ENCODE measurements at regions of chr9 and their contacts with region 1.

Region 1: GRCh38 chr9:75866273-75866871 is 24.1 kb upstream of the PCSK5 start:
- DNase-seq: peak in 8 of 9 experiments; percentile 8 to 62 (median 28)
- ATAC-seq: no peak
- H3K4me3 ChIP-seq: no peak overlapping the region
- H3K4me3 Mint-ChIP-seq: no peak overlapping the region
- H3K27ac ChIP-seq: no peak overlapping the region
- H3K27ac Mint-ChIP-seq: no peak overlapping the region
- H3K4me1 ChIP-seq: peaks cover 20% of the 10 kb centered on the region
- H3K4me1 Mint-ChIP-seq: peaks cover 26% of the 10 kb centered on the region
- H3K27me3 ChIP-seq: peaks cover 0 to 2% of the 10 kb centered on the region in 2 experiments
- H3K27me3 Mint-ChIP-seq: no peaks in the 10 kb centered on the region
- CTCF ChIP-seq: peak; percentile 73

Region 2: GRCh38 chr9:74765481-74765971 is 1100.8 kb before region 1 on chr9:
- CTCF ChIA-PET with region 1: no interaction called
- POLR2A ChIA-PET with region 1: no interaction called
- intact Hi-C with region 1: loop called (anchors 5 to 10 kb)
- DNase-seq: no peak
- ATAC-seq: no peak
- H3K4me3 ChIP-seq: no peak overlapping the region
- H3K4me3 Mint-ChIP-seq: no peak overlapping the region
- H3K27ac ChIP-seq: no peak overlapping the region
- H3K27ac Mint-ChIP-seq: no peak overlapping the region
- H3K4me1 ChIP-seq: no peaks in the 10 kb centered on the region
- H3K4me1 Mint-ChIP-seq: no peaks in the 10 kb centered on the region
- H3K27me3 ChIP-seq: no peaks in the 10 kb centered on the region
- H3K27me3 Mint-ChIP-seq: peaks cover 7% of the 10 kb centered on the region
- CTCF ChIP-seq: no peak

Region 3: GRCh38 chr9:75265525-75265972 is 600.8 kb before region 1 on chr9:
- CTCF ChIA-PET with region 1: no interaction called
- POLR2A ChIA-PET with region 1: no interaction called
- intact Hi-C with region 1: loop called in 1 of 2 experiments (anchors 10 kb)
- DNase-seq: peak in 7 of 9 experiments; percentile 19 to 61 (median 42)
- ATAC-seq: peak; percentile 58
- H3K4me3 ChIP-seq: no peak overlapping the region
- H3K4me3 Mint-ChIP-seq: no peak overlapping the region
- H3K27ac ChIP-seq: no peak overlapping the region
- H3K27ac Mint-ChIP-seq: no peak overlapping the region
- H3K4me1 ChIP-seq: no peaks in the 10 kb centered on the region
- H3K4me1 Mint-ChIP-seq: no peaks in the 10 kb centered on the region
- H3K27me3 ChIP-seq: no peaks in the 10 kb centered on the region
- H3K27me3 Mint-ChIP-seq: no peaks in the 10 kb centered on the region
- CTCF ChIP-seq: peak; percentile 96

Region 4: DNA sequence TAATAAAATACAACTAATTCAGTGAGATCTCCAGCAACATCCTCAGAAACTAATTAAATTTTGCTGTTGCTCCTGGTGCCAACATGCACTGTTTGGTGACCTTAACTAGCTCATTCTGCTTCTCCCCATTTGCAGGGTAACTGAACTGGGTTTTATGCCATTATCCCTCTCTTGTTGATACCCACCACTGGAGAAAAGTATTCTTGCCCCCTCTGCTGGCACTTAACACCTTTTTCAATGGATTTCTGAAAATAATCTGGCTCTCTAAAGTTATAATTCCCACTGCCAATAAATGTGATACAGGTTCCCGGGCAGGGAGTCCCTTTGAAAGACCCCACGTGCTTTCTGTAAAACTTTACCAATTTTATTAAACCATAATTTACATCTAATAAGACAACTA is 383.8 kb before region 1 on chr9:
- CTCF ChIA-PET with region 1: no interaction called
- POLR2A ChIA-PET with region 1: no interaction called
- intact Hi-C with region 1: no loop called
- DNase-seq: no peak
- ATAC-seq: no peak
- H3K4me3 ChIP-seq: no peak overlapping the region
- H3K4me3 Mint-ChIP-seq: no peak overlapping the region
- H3K27ac ChIP-seq: no peak overlapping the region
- H3K27ac Mint-ChIP-seq: no peak overlapping the region
- H3K4me1 ChIP-seq: no peaks in the 10 kb centered on the region
- H3K4me1 Mint-ChIP-seq: no peaks in the 10 kb centered on the region
- H3K27me3 ChIP-seq: no peaks in the 10 kb centered on the region
- H3K27me3 Mint-ChIP-seq: peaks cover 4% of the 10 kb centered on the region
- CTCF ChIP-seq: no peak

Region 5: GRCh38 chr9:75890472-75891276 is 24.3 kb after region 1 on chr9 and contains the start of gene PCSK5:
- CTCF ChIA-PET with region 1: interaction called, 13 read pairs
- POLR2A ChIA-PET with region 1: interaction called, 5 read pairs
- intact Hi-C with region 1: loop called in 1 of 2 experiments (anchors 2 kb)
- DNase-seq: peak; percentile 66 to 92 (median 85)
- ATAC-seq: peak; percentile 90
- H3K4me3 ChIP-seq: peak within 1 kb of the TSS; percentile 81 to 82
- H3K4me3 Mint-ChIP-seq: peak within 1 kb of the TSS; percentile 92
- H3K27ac ChIP-seq: peak within 1 kb of the TSS; percentile 60 to 70
- H3K27ac Mint-ChIP-seq: peak within 1 kb of the TSS; percentile 85
- H3K4me1 ChIP-seq: peaks cover 16% of the 10 kb centered on the region
- H3K4me1 Mint-ChIP-seq: peaks cover 54% of the 10 kb centered on the region
- H3K27me3 ChIP-seq: peaks cover 0 to 6% of the 10 kb centered on the region in 2 experiments
- H3K27me3 Mint-ChIP-seq: no peaks in the 10 kb centered on the region
- CTCF ChIP-seq: no peak
- total RNA-seq, gene PCSK5: 13.7 to 13.8 TPM

Region 6: GRCh38 chr9:76177931-76178330 is 311.6 kb after region 1 on chr9:
- CTCF ChIA-PET with region 1: no interaction called
- POLR2A ChIA-PET with region 1: no interaction called
- intact Hi-C with region 1: loop called in 1 of 2 experiments (anchors 10 kb)
- DNase-seq: no peak
- ATAC-seq: no peak
- H3K4me3 ChIP-seq: no peak overlapping the region
- H3K4me3 Mint-ChIP-seq: no peak overlapping the region
- H3K27ac ChIP-seq: no peak overlapping the region
- H3K27ac Mint-ChIP-seq: no peak overlapping the region
- H3K4me1 ChIP-seq: no peaks in the 10 kb centered on the region
- H3K4me1 Mint-ChIP-seq: no peaks in the 10 kb centered on the region
- H3K27me3 ChIP-seq: no peaks in the 10 kb centered on the region
- H3K27me3 Mint-ChIP-seq: no peaks in the 10 kb centered on the region
- CTCF ChIP-seq: no peak

Region 7: DNA sequence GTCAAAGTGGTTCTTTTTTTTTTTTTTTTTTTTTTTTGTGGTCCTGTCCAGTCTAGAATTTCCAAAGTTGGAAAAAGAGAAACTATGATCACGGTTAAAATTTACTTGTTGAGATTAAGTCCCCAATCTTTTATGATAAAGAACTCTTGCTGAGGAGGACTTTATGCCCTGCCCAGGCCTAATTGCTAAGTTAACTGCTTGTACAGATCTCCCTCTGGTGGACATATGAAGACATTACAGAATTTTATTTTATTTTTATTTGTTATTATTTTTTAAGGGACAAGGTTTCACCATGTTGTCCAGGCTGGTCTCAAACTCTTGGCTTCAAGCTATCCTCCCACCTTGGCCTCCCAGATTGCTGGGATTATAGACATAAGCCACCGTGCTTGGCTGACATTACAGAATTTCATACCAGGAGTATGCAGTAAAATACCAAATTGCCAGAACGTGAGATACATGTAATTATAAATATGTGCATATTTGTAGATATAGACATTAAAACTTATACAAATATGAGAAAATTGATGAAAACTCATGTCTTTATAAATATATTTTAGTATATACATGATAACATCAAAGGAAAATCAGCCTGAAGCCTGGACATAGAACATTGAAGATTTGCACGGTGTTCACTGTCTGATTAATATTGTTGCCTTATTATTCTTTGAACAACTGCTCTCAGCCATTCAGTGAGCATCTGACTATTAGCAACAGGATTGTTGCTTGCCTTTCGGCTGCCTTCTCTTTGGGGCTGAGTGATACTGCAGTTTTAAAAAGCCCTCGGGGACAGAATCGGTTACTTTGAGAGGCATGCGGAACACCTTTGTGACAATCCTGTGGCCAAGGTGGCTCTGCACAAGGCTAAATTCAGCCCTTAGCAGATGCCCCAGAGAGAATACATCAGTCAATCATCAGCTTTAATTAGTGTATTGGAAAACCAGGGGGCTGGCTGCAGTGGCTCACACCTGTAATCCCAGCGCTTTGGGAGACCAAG is 436.9 kb after region 1 on chr9:
- CTCF ChIA-PET with region 1: interaction called, 12 read pairs
- POLR2A ChIA-PET with region 1: no interaction called
- intact Hi-C with region 1: loop called (anchors 2 to 5 kb)
- DNase-seq: peak in 3 of 9 experiments; percentile 8 to 62 (median 46)
- ATAC-seq: peak; percentile 58
- H3K4me3 ChIP-seq: no peak overlapping the region
- H3K4me3 Mint-ChIP-seq: no peak overlapping the region
- H3K27ac ChIP-seq: no peak overlapping the region
- H3K27ac Mint-ChIP-seq: no peak overlapping the region
- H3K4me1 ChIP-seq: no peaks in the 10 kb centered on the region
- H3K4me1 Mint-ChIP-seq: no peaks in the 10 kb centered on the region
- H3K27me3 ChIP-seq: no peaks in the 10 kb centered on the region
- H3K27me3 Mint-ChIP-seq: peaks cover 8% of the 10 kb centered on the region
- CTCF ChIP-seq: peak; percentile 73